ENCODE measurements at regions of chr2 and their contacts with region 1.

Region 1: GRCh38 chr2:85878719-85879385 is 9.9 kb downstream of the ST3GAL5 start:
- DNase-seq: no peak
- ATAC-seq: peak in 2 of 4 experiments; percentile 51 to 64
- H3K4me3 ChIP-seq: no peak overlapping the region
- H3K4me3 Mint-ChIP-seq: peak overlapping the region in 1 of 3 donors; percentile 64
- H3K27ac ChIP-seq: no peak overlapping the region
- H3K27ac Mint-ChIP-seq: peak overlapping the region; percentile 70 to 75
- H3K4me1 ChIP-seq: peaks cover 19 to 34% of the 10 kb centered on the region in 2 experiments
- H3K4me1 Mint-ChIP-seq: peaks cover 73 to 81% (median 74%) of the 10 kb centered on the region in 3 donors
- H3K27me3 ChIP-seq: no peaks in the 10 kb centered on the region
- H3K27me3 Mint-ChIP-seq: no peaks in the 10 kb centered on the region

Region 2: DNA sequence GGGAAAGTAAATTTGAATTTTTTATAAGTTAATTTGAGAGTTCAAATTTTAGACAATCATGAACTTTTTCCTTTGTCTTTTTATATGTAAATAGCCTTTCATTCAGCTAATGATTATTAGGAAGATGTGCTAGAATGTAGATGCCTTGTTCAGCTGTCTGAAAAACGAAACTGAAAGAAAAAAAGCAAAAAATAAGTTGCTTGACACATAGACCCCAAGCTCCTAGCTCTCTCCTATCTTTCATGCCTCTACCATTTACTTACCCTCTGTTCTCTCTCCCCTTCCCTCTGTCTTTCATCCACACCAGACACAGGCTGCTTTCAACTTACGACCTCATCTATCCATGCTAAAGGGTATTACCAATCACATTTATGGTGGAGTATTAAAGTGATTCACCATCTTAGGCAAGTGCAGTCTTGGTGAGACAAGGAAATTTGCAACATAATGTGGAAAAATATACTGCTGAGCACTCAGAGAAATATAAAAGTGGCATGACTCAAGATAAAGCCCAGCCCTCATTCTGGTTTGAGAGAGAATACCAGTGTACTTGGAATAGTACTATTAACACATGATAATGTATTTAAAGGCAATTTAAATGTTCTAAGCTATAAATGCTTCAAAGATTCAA is 1845.4 kb before region 1 on chr2:
- CTCF ChIA-PET with region 1: no interaction called
- POLR2A ChIA-PET with region 1: no interaction called
- DNase-seq: no peak
- ATAC-seq: no peak
- H3K4me3 ChIP-seq: no peak overlapping the region
- H3K4me3 Mint-ChIP-seq: peak overlapping the region in 2 of 3 donors; percentile 3 to 7
- H3K27ac ChIP-seq: no peak overlapping the region
- H3K27ac Mint-ChIP-seq: no peak overlapping the region
- H3K4me1 ChIP-seq: no peaks in the 10 kb centered on the region
- H3K4me1 Mint-ChIP-seq: peaks cover 6 to 9% (median 8%) of the 10 kb centered on the region in 3 donors
- H3K27me3 ChIP-seq: no peaks in the 10 kb centered on the region
- H3K27me3 Mint-ChIP-seq: no peaks in the 10 kb centered on the region

Region 3: GRCh38 chr2:85707304-85707703 is 171.5 kb before region 1 on chr2:
- CTCF ChIA-PET with region 1: no interaction called
- POLR2A ChIA-PET with region 1: no interaction called
- DNase-seq: peak in 30 of 35 experiments; percentile 16 to 88 (median 51)
- ATAC-seq: peak; percentile 83 to 87 (median 85)
- H3K4me3 ChIP-seq: no peak overlapping the region
- H3K4me3 Mint-ChIP-seq: no peak overlapping the region
- H3K27ac ChIP-seq: no peak overlapping the region
- H3K27ac Mint-ChIP-seq: no peak overlapping the region
- H3K4me1 ChIP-seq: peaks cover 0 to 23% of the 10 kb centered on the region in 2 experiments
- H3K4me1 Mint-ChIP-seq: peaks cover 15 to 38% (median 16%) of the 10 kb centered on the region in 3 donors
- H3K27me3 ChIP-seq: peaks cover 0 to 36% of the 10 kb centered on the region in 2 experiments
- H3K27me3 Mint-ChIP-seq: peaks cover 6 to 7% of the 10 kb centered on the region in 2 donors

Region 4: GRCh38 chr2:85935746-85936208 is 56.9 kb after region 1 on chr2:
- CTCF ChIA-PET with region 1: no interaction called
- POLR2A ChIA-PET with region 1: no interaction called
- DNase-seq: no peak
- ATAC-seq: no peak
- H3K4me3 ChIP-seq: no peak overlapping the region
- H3K4me3 Mint-ChIP-seq: no peak overlapping the region
- H3K27ac ChIP-seq: no peak overlapping the region
- H3K27ac Mint-ChIP-seq: no peak overlapping the region
- H3K4me1 ChIP-seq: peaks cover 7 to 8% of the 10 kb centered on the region in 2 experiments
- H3K4me1 Mint-ChIP-seq: peaks cover 18 to 19% (median 19%) of the 10 kb centered on the region in 3 donors
- H3K27me3 ChIP-seq: no peaks in the 10 kb centered on the region
- H3K27me3 Mint-ChIP-seq: no peaks in the 10 kb centered on the region

Region 5: DNA sequence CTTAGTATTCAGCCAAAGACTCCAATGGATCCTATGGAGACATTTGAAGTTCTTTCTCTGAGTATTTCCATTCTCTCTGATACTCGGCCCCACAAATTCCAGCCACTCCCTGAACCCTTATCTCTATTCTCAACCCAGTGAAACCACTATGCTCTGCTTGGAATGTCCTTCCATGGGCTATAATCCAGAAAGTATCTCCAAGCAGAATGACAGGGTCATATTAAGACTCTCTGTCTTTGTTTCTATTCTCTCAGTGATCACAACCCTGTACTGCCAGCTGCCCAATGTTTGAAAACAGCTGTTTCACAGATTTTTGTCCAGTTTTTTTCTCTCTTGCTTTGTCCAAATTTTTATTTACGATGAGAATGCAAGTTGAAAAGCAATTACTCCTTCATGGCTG is 662.5 kb after region 1 on chr2:
- CTCF ChIA-PET with region 1: interaction called in 1 of 2 experiments, 11 read pairs
- POLR2A ChIA-PET with region 1: no interaction called
- DNase-seq: no peak
- ATAC-seq: no peak
- H3K4me3 ChIP-seq: no peak overlapping the region
- H3K4me3 Mint-ChIP-seq: no peak overlapping the region
- H3K27ac ChIP-seq: no peak overlapping the region
- H3K27ac Mint-ChIP-seq: no peak overlapping the region
- H3K4me1 ChIP-seq: no peaks in the 10 kb centered on the region
- H3K4me1 Mint-ChIP-seq: peaks cover 12 to 34% (median 13%) of the 10 kb centered on the region in 3 donors
- H3K27me3 ChIP-seq: no peaks in the 10 kb centered on the region
- H3K27me3 Mint-ChIP-seq: no peaks in the 10 kb centered on the region